K562 (cell line): ENCODE measurements at regions of chr1 and their contacts with region 1.

Region 1: DNA sequence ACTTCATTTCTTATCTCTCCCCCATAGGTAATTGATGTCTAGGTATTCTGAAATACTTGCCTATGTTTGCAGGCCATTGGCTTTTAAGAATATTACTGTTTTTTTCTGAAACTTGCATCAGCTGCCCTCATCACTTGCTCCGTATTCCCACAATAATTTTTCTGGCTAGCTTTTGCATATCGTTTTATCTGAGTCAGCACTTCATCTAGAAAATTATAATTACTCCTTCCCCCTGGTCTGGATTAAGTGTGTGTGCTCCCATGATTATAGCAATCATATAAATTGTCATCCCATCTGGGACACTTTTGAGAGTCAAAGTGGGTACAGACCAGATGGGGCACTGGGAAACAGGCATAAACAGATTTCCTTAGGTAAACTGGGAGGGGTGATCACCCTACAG is 583.2 kb upstream of the B3GALT2 start:
- DNase-seq: no peak
- ATAC-seq: no peak
- H3K4me3 ChIP-seq: no peak overlapping the region
- H3K27ac ChIP-seq: no peak overlapping the region
- H3K4me1 ChIP-seq: no peaks in the 10 kb centered on the region
- H3K27me3 ChIP-seq: no peaks in the 10 kb centered on the region
- CTCF ChIP-seq: no peak
- EP300 ChIP-seq: no peak
- POLR2A ChIP-seq: no peak
- RAD21 ChIP-seq: no peak

Region 2: GRCh38 chr1:193241132-193241827 is 528.4 kb before region 1 on chr1:
- CTCF ChIA-PET with region 1: no interaction called
- POLR2A ChIA-PET with region 1: no interaction called
- in situ Hi-C with region 1: no loop called
- intact Hi-C with region 1: no loop called
- DNase-seq: no peak
- ATAC-seq: peak; percentile 40
- H3K4me3 ChIP-seq: no peak overlapping the region
- H3K27ac ChIP-seq: no peak overlapping the region
- H3K4me1 ChIP-seq: peaks cover 0 to 3% of the 10 kb centered on the region in 2 experiments; a peak in 1 of 5 replicates
- H3K27me3 ChIP-seq: no peaks in the 10 kb centered on the region
- CTCF ChIP-seq: no peak
- EP300 ChIP-seq: no peak
- POLR2A ChIP-seq: no peak
- RAD21 ChIP-seq: no peak

Region 3: DNA sequence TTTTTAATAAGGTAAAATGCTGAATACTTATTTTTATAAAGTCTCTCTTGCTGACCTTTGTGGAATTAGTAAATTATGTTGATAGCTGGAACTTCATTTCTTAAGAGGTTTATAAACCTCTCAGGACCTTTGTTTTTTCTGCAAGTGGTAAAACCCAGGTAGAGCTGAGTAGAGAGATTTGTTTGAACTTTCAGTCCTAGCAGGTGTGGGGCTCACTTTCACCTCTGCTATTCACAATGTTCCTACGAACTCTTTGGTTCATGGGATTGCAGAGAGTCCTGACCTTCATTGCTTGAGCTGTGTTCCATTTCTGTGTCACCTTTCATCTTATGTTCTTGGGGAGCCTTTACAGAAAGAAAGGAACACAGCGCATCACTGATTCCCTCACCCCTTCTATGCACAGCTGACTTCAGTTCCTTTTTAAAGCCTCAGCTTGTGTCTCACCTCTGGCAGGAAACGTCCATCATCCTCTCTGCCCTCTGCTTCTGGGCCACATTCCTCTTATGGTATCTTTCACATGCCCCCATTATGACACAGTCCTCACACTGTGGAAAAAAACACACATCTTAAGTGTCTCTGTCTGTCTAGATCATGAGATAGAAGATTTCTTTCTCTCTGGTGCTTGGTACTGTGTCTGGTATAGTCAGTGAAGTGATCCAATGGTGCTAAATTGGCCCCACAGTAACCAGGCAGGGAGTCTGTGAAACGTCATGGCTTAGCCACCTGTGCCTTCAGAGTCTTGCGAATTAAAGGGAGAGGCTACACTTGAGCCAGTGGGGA is 320.8 kb before region 1 on chr1:
- CTCF ChIA-PET with region 1: no interaction called
- POLR2A ChIA-PET with region 1: no interaction called
- in situ Hi-C with region 1: no loop called
- intact Hi-C with region 1: loop called (anchors 10 kb)
- DNase-seq: no peak
- ATAC-seq: no peak
- H3K4me3 ChIP-seq: no peak overlapping the region
- H3K27ac ChIP-seq: no peak overlapping the region
- H3K4me1 ChIP-seq: no peaks in the 10 kb centered on the region
- H3K27me3 ChIP-seq: no peaks in the 10 kb centered on the region
- CTCF ChIP-seq: no peak
- EP300 ChIP-seq: no peak
- POLR2A ChIP-seq: no peak
- RAD21 ChIP-seq: no peak